ENCODE measurements at regions of chr6 and their contacts with region 1.

Region 1: GRCh38 chr6:37177935-37178517 is 8.1 kb downstream of the PIM1 start:
- DNase-seq: no peak
- H3K4me3 ChIP-seq: peak overlapping the region in 1 of 3 experiments; percentile 42
- H3K4me3 Mint-ChIP-seq: no peak overlapping the region
- H3K27ac ChIP-seq: no peak overlapping the region
- H3K27ac Mint-ChIP-seq: peak overlapping the region in 5 of 7 donors; percentile 13 to 30 (median 20)
- H3K4me1 ChIP-seq: peaks cover 64 to 70% of the 10 kb centered on the region in 2 donors
- H3K4me1 Mint-ChIP-seq: peaks cover 66% of the 10 kb centered on the region
- H3K27me3 ChIP-seq: no peaks in the 10 kb centered on the region
- H3K27me3 Mint-ChIP-seq: peaks cover 0 to 2% (median 0%) of the 10 kb centered on the region in 3 donors
- CTCF ChIP-seq: no peak

Region 2: DNA sequence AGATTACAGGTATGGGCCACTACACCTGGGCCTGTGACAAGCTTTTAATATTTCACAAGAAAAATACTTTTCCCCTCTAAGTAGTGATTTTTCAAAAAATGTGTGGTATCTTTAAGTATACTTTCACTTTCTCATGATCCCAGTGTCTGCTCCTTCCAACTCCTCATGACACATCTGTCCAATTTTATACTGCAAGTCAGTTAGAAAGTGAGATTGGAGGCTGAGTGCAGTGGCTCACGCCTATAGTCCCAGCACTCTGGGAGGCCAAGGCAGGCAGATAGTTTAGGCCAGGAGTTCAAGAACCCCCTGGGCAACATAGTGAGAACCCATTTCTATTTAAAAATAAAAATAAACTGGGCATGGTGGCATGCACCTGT is 12.1 kb after region 1 on chr6:
- intact Hi-C with region 1: loop called in 1 of 2 experiments (anchors 1 kb)
- DNase-seq: peak in 1 of 3 donors; percentile 28
- H3K4me3 ChIP-seq: peak overlapping the region in 1 of 3 experiments; percentile 32
- H3K4me3 Mint-ChIP-seq: no peak overlapping the region
- H3K27ac ChIP-seq: peak overlapping the region; percentile 80 to 84
- H3K27ac Mint-ChIP-seq: peak overlapping the region; percentile 83 to 95 (median 92)
- H3K4me1 ChIP-seq: peaks cover 58 to 68% of the 10 kb centered on the region in 2 donors
- H3K4me1 Mint-ChIP-seq: peaks cover 63% of the 10 kb centered on the region
- H3K27me3 ChIP-seq: no peaks in the 10 kb centered on the region
- H3K27me3 Mint-ChIP-seq: peaks cover 0 to 3% (median 0%) of the 10 kb centered on the region in 3 donors
- CTCF ChIP-seq: no peak

Region 3: DNA sequence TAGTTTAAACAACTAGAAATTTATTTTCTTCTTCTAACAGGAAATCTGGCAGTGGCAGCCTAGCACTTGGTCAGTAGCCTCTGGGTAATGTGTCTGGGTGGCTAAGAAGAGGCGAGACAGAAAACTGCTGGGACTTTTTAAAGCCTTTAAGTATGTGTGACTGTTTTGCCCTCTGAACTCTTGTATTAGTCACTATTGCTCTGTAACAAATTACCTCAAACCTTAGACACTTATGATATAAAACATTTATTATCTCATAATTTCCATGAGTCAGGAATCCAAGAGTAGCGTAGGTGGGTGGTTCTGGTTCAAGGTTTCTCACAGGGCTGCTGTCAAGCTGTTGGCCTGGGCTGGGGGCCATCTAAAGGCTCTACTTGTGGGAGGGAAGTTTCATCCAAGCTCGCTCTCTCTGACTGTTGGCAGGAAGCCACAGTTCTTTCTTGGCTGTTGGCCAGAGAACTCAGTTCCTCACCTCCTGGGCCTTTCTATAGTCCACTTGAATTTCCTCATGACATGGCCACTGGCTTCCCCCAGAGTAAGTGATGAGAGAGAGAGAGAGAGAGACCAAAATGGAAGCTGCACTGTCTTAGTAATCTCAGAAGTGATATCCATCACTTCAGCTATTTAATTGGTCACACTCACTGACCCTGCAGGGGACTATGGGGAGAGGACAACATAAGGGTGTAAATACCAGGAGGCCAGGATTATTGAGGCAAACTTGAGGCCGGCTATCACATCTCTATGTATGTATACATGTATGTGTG is 62.1 kb after region 1 on chr6:
- intact Hi-C with region 1: no loop called
- DNase-seq: peak; percentile 87 to 92 (median 89)
- H3K4me3 ChIP-seq: no peak overlapping the region
- H3K4me3 Mint-ChIP-seq: no peak overlapping the region
- H3K27ac ChIP-seq: peak overlapping the region; percentile 64 to 75
- H3K27ac Mint-ChIP-seq: peak overlapping the region; percentile 86 to 97 (median 92)
- H3K4me1 ChIP-seq: peaks cover 23 to 26% of the 10 kb centered on the region in 2 donors
- H3K4me1 Mint-ChIP-seq: peaks cover 26% of the 10 kb centered on the region
- H3K27me3 ChIP-seq: no peaks in the 10 kb centered on the region
- H3K27me3 Mint-ChIP-seq: no peaks in the 10 kb centered on the region
- CTCF ChIP-seq: no peak

Region 4: GRCh38 chr6:37396476-37397180 is 218.6 kb after region 1 on chr6:
- intact Hi-C with region 1: no loop called
- DNase-seq: no peak
- H3K4me3 ChIP-seq: no peak overlapping the region
- H3K4me3 Mint-ChIP-seq: no peak overlapping the region
- H3K27ac ChIP-seq: no peak overlapping the region
- H3K27ac Mint-ChIP-seq: no peak overlapping the region
- H3K4me1 ChIP-seq: peaks cover 8% of the 10 kb centered on the region in 2 donors
- H3K4me1 Mint-ChIP-seq: peaks cover 9% of the 10 kb centered on the region
- H3K27me3 ChIP-seq: no peaks in the 10 kb centered on the region
- H3K27me3 Mint-ChIP-seq: peaks cover 6 to 11% (median 6%) of the 10 kb centered on the region in 3 donors
- CTCF ChIP-seq: no peak

Measured in CD14-positive monocyte (primary cell).